ENCODE measurements at regions of chr3 and their contacts with region 1.

Region 1: DNA sequence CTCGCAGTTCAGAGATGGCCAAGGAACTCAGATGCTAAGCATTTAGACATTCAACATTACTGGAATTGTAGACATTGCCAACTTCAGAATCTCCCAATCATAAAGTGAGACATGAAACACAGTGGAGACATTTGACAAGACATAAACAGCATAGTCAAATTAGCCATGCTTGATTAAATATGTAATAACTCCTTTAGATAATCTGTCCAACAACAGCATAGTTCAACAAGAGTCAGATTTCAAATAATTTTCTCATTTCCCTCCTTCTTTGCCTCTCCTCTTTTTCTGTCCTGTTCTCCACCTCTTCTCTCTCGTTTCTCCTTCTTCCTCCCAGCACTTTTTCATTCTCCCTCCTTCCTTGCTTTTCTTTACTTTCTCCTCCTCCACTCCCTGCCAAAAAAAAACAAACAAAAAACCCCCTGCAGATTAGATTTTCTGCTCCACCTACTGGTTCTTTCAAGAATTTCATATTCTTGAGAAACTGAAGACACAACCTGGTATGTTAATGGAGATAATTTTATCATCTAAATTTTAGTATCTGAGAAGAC is 20.2 kb downstream of the CPOX start:
- DNase-seq: no peak
- H3K4me3 Mint-ChIP-seq: no peak overlapping the region
- H3K27ac Mint-ChIP-seq: peak overlapping the region; percentile 66
- H3K4me1 Mint-ChIP-seq: peaks cover 54% of the 10 kb centered on the region
- H3K27me3 Mint-ChIP-seq: no peaks in the 10 kb centered on the region

Region 2: DNA sequence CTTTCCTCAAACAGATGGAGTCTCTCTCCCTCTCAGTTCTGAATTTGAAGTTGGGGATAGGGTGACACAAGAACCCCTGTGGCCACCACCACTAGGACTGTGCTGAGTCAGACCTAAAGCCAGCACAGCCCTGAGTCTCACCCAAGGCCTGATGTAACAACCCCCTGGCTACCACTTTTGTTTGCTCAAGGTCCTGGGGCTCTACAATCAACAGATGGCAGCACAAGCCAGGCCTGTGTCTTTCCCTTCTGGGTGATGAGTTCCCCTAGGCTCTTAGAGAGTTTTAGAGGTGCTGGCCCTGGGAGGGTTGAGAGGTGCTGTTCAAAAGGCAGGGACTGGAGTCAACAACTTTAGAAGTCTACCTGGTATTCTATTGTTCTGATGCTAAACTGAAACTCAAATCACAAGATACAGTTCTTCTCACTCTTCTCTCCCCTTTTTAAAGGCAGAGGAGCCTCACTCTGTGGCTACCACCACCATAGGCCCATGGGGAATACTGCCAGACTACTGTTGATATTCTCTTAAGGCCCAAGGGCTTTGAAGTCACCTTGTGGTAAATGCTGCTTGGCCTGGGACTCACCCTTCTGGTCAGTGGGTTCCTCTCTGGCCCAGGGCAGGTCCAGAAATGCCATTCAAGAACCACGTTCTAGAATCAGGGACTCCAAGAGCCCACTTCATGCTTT is 213.1 kb before region 1 on chr3:
- CTCF ChIA-PET with region 1: no interaction called
- POLR2A ChIA-PET with region 1: no interaction called
- intact Hi-C with region 1: loop called (anchors 1 kb)
- DNase-seq: peak; percentile 43
- H3K4me3 Mint-ChIP-seq: no peak overlapping the region
- H3K27ac Mint-ChIP-seq: no peak overlapping the region
- H3K4me1 Mint-ChIP-seq: no peaks in the 10 kb centered on the region
- H3K27me3 Mint-ChIP-seq: no peaks in the 10 kb centered on the region

Region 3: DNA sequence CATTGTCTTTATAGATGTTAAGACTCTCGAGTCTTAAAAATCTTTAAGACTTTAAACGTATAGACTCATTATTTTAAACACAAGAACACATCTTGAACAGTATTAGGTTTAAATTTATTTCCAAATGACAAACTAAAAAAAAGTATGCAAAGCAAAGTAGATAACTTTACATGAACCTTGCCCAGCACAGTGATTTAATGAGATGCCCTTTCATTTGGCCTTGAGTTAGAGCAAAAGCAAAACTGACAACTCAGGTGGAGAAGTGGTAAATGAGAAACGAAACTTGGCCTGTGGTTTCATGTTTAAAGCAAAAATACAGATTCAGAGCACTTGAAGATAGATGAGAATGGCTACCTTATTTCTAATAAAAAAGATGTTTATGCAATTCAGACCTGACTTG is 32.9 kb before region 1 on chr3:
- CTCF ChIA-PET with region 1: interaction called, 7 read pairs
- POLR2A ChIA-PET with region 1: interaction called, 6 read pairs
- intact Hi-C with region 1: loop called (anchors 1 kb)
- DNase-seq: no peak
- H3K4me3 Mint-ChIP-seq: no peak overlapping the region
- H3K27ac Mint-ChIP-seq: peak overlapping the region; percentile 69
- H3K4me1 Mint-ChIP-seq: peaks cover 57% of the 10 kb centered on the region
- H3K27me3 Mint-ChIP-seq: no peaks in the 10 kb centered on the region